ENCODE measurements at regions of chr17 and their contacts with region 1.

Region 1: DNA sequence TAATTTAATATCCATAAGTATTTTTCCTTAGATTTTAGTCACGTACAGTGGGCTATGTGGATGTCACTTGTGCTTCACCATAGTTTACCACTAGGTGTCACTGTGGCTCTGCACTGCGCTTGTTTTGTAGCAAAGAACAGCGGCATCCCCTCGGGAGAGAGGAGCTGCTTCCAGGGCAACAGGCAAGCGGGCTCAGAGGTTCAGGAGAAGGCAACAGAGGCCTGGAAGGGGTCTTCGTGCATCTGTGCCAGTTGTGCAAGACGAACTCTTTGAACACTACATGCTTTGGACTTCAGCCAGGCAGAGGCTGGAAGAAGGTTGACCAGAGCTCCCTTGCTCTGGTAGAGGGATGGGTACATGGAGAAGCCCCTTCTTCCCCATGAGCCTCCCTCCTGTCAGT is 20.6 kb downstream of the CYB561 start:
- DNase-seq: peak; percentile 57 to 89
- ATAC-seq: peak; percentile 78 to 97 (median 93)
- H3K4me3 ChIP-seq: no peak overlapping the region
- H3K4me3 Mint-ChIP-seq: no peak overlapping the region
- H3K27ac ChIP-seq: no peak overlapping the region
- H3K27ac Mint-ChIP-seq: no peak overlapping the region
- H3K4me1 ChIP-seq: peaks cover 16% of the 10 kb centered on the region
- H3K4me1 Mint-ChIP-seq: peaks cover 6 to 13% of the 10 kb centered on the region in 2 donors
- H3K27me3 ChIP-seq: no peaks in the 10 kb centered on the region
- H3K27me3 Mint-ChIP-seq: no peaks in the 10 kb centered on the region
- CTCF ChIP-seq: peak; percentile 98

Region 2: GRCh38 chr17:63478791-63479494 is 53.5 kb after region 1 on chr17:
- intact Hi-C with region 1: loop called (anchors 1 kb)
- DNase-seq: peak; percentile 49 to 87
- ATAC-seq: peak; percentile 68 to 90 (median 81)
- H3K4me3 ChIP-seq: no peak overlapping the region
- H3K4me3 Mint-ChIP-seq: peak overlapping the region; percentile 71
- H3K27ac ChIP-seq: no peak overlapping the region
- H3K27ac Mint-ChIP-seq: no peak overlapping the region
- H3K4me1 ChIP-seq: peaks cover 15% of the 10 kb centered on the region
- H3K4me1 Mint-ChIP-seq: peaks cover 0 to 13% of the 10 kb centered on the region in 2 donors
- H3K27me3 ChIP-seq: peaks cover 17% of the 10 kb centered on the region
- H3K27me3 Mint-ChIP-seq: peaks cover 16 to 25% of the 10 kb centered on the region in 2 donors
- CTCF ChIP-seq: peak; percentile 59

Region 3: GRCh38 chr17:63611354-63611753 is 185.9 kb after region 1 on chr17:
- intact Hi-C with region 1: loop called (anchors 1 kb)
- DNase-seq: peak in 1 of 2 donors; percentile 38
- ATAC-seq: no peak
- H3K4me3 ChIP-seq: no peak overlapping the region
- H3K4me3 Mint-ChIP-seq: no peak overlapping the region
- H3K27ac ChIP-seq: no peak overlapping the region
- H3K27ac Mint-ChIP-seq: no peak overlapping the region
- H3K4me1 ChIP-seq: peaks cover 12% of the 10 kb centered on the region
- H3K4me1 Mint-ChIP-seq: peaks cover 0 to 4% of the 10 kb centered on the region in 2 donors
- H3K27me3 ChIP-seq: no peaks in the 10 kb centered on the region
- H3K27me3 Mint-ChIP-seq: no peaks in the 10 kb centered on the region
- CTCF ChIP-seq: no peak

Region 4: GRCh38 chr17:63707151-63707550 is 281.7 kb after region 1 on chr17:
- intact Hi-C with region 1: loop called (anchors 5 kb)
- DNase-seq: peak in 1 of 2 donors; percentile 67
- ATAC-seq: peak in 2 of 3 donors; percentile 14 to 24
- H3K4me3 ChIP-seq: no peak overlapping the region
- H3K4me3 Mint-ChIP-seq: peak overlapping the region; percentile 74
- H3K27ac ChIP-seq: peak overlapping the region; percentile 69
- H3K27ac Mint-ChIP-seq: peak overlapping the region; percentile 92 to 97
- H3K4me1 ChIP-seq: peaks cover 81% of the 10 kb centered on the region
- H3K4me1 Mint-ChIP-seq: peaks cover 67 to 68% of the 10 kb centered on the region in 2 donors
- H3K27me3 ChIP-seq: no peaks in the 10 kb centered on the region
- H3K27me3 Mint-ChIP-seq: no peaks in the 10 kb centered on the region
- CTCF ChIP-seq: no peak

Measured in natural killer cell (primary cell).